Right ventricle myocardium superior (tissue), 1 donor: ENCODE measurements at regions of chr14 and their contacts with region 1.

Region 1: GRCh38 chr14:70907176-70907995 is at the start of gene PCNX1:
- DNase-seq: peak; percentile 93
- ATAC-seq: peak; percentile 85
- total RNA-seq, gene PCNX1: 43.3 TPM

Region 2: DNA sequence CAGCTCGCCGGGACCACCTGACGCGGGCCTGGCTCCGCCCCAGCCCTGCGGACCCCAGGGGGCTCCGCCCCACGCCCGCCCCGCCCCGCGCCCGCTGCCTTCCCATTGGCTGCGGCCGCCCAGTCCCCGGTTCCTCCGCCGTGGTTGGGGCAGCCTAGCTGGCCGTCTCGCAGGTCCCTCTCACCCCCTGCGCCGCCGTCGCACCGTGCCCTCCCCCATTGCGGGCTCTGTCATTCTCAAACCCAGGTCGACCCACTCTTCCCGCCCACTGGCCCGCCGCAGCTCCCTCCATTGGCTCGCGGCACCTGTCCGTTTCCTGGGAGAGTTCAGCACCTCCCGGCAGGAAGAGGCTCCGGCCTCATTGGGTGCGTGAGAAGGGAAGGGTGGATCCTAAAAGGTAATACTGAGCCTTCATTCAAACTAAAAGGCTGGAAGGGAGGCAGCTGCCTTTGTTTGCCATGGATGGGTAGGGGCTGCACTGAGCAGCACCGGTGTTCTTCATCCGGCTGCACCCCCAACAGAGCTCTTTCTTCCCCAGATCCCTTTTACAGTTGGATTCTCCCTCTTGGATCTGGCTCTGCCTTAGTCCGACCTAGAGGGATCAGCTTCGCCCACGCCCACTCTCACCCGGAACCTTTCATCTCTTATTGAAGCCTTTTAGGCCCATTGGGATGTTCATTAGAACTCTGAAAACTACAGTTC is 97.7 kb before region 1 on chr14:
- intact Hi-C with region 1: no loop called
- DNase-seq: peak; percentile 90
- ATAC-seq: peak; percentile 97

Region 3: GRCh38 chr14:70821584-70822529 is 85.5 kb before region 1 on chr14:
- intact Hi-C with region 1: loop called (anchors 10 kb)
- DNase-seq: peak; percentile 70
- ATAC-seq: peak; percentile 59

Region 4: DNA sequence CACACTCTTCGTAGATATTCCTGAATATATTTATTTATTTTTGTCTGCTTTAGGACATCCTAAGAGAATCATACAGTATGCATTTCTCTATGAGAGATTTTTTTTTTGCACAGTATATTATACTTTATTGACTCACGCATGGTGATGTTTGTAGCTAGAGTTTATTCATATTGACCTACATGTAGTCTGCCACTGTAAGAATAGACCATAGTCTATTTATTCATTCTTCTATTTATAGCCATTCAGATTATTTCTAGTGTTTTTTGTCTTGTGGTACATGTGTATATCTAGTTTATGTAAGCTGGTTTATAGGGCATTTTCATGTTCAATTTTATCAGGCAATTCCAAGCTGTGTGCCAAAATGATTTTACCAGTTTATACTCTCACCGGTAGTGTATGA is 45.1 kb after region 1 on chr14:
- intact Hi-C with region 1: loop called (anchors 5 kb)
- DNase-seq: no peak
- ATAC-seq: peak; percentile 70

Region 5: DNA sequence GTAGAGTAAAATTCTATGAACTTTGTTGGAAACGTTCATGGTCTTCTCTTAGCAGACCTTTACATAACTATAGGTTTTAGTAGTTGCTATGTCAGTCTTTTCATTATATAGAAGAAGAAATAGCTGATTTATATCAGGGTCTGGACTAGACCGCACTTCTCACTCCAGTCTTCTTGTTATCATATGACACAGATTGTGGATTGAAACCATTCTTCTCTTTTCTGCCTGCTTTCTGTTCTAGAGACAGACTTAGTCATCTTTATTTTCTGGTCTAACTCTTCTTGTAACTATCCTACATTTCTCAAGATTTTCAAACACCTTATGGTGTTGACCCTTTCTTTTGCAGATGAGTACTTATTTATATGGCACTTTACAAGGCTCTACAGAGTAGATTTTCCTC is 55.5 kb after region 1 on chr14:
- intact Hi-C with region 1: no loop called
- DNase-seq: no peak
- ATAC-seq: no peak